ENCODE measurements at regions of chr10 and their contacts with region 1.

Region 1: DNA sequence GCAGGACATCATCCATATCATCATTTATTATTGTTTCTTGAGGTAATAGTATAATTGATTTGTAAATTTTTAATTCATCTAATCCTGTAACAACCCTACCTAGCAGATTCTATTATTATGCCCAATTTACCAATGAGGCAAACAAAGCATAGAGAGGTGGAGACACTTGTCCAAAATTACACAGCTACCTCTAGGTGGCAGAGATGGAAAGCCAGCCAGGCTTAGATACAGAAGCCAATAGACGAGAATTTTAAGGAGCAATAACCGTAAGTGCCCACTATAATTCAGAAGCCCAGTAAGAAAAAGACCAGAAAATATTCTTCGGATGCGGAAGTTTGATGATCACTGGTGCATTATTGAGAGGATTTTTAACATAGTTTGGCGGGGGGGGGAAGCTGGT is 54.0 kb downstream of the ANK3 start:
- DNase-seq: no peak
- H3K4me3 ChIP-seq: no peak overlapping the region
- CTCF ChIP-seq: no peak

Region 2: DNA sequence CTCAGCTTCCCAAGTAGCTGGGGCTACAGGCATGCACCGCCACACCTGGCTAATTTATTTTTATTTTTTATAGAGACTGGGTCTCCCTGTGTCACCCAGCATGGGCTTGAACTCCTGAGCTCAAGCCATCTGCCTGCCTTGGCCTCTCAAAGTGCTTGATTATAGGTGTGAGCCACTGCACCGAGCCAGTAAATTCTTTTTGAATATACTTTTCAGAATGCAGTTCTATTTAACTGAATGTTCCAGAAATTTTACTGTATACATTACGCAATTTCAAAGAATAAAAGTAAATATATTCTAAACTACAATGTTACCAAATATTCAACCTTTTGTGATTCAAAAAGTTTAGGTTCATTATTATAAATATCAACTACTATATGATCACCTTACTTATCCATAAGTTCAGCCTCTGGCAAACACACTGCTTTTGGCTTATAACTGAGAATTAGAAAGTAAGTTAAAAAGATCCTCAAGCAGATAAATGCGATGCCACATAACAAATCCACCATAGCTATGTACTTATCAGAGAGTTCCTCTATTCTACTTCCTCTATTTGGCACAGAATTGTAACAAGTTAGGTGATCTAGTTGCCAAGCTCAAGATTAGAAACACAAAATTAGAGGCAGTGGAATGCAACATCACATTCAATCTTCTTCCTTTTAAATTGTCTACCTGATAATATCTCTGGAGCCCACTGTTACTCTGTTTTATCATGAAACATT is 64.2 kb before region 1 on chr10:
- CTCF ChIA-PET with region 1: no interaction called
- POLR2A ChIA-PET with region 1: no interaction called
- DNase-seq: no peak
- H3K4me3 ChIP-seq: no peak overlapping the region
- CTCF ChIP-seq: no peak

Region 3: DNA sequence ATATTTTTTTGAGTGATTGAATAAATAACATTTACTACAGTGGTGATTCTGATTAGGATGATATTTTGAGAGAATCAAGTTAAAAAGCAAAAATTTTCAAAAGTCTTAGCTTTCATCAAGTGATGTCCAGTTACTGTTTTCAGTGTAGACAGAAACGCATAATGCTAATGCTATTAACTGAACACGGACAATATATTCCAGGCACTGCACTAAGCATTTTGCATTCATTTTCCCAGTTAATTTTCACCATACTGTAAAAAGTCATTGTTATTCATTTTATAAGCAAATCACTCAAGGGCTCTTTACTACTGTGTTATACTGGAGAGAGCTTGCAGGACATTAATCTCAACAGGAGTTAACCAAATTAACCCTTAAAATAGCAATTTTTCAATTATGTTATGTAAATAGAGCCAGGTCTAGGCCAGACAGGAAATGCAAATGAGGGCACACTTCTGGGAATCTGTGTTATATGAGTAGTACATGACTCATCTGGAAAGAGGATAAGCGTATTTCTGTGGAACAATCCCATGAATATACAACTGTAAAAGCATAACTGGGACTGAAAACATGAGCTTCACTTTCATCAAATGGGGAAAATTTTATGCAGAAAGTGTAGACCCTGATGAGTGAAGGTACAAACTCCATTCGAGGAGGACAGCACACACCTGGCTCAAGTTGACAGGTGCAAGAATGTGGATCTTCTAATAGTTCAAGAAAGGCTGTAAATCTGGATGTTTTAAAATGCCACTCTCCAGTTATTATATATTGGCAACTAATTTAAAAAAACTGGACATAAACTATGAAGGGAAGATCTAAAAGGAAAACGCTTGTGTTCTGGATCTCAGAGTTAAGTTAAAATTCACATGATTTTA is 21.4 kb before region 1 on chr10:
- CTCF ChIA-PET with region 1: interaction called, 16 read pairs
- POLR2A ChIA-PET with region 1: no interaction called
- DNase-seq: no peak
- H3K4me3 ChIP-seq: no peak overlapping the region
- CTCF ChIP-seq: no peak

Measured in AG04449 (cell line).